AG04449 (cell line): ENCODE measurements at regions of chr2 and their contacts with region 1.

Region 1: DNA sequence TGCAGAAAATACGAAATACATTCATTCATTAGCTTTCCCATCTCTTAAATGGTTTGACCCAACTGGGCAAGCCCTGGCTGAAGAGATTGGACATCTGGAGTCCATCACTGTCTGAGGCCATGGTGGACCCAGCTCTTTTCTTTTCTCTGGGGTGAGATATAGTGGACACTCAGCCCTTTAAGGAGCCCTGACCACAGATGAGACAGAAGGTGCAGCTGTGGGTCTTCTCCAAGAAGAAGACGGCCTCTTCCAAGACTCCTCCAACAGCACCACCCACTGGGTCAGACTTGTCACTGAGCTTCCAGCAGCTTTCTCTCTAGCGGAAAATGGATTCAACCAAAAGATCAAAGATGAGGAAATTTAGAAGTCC is 27.2 kb downstream of the TWIST2 start:
- DNase-seq: no peak
- H3K4me3 ChIP-seq: no peak overlapping the region
- CTCF ChIP-seq: no peak

Region 2: DNA sequence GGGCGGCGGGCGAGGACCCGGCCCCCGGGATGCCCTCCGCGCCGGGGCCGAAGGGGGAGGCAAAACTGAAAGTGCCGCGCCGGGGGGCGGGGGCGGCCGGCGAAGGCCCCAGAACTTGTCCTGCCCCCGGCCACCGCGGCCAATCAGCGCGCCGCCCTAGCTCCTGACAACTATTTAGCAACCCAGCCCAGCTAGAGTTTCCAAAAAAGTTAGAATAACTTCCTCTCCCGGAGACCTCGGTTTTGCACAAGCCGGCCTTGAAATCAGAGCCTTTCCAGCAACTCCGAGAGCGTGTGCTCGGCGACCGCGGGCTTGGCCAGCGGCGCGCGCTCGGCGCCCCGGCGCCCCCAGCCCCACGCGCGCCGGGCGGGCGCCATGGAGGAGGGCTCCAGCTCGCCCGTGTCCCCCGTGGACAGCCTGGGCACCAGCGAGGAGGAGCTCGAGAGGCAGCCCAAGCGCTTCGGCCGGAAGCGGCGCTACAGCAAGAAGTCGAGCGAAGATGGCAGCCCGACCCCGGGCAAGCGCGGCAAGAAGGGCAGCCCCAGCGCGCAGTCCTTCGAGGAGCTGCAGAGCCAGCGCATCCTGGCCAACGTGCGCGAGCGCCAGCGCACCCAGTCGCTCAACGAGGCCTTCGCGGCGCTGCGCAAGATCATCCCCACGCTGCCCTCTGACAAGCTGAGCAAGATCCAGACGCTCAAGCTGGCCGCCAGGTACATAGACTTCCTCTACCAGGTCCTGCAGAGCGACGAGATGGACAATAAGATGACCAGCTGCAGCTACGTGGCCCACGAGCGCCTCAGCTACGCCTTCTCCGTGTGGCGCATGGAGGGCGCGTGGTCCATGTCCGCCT is 27.0 kb before region 1 on chr2 and contains the start of gene TWIST2:
- CTCF ChIA-PET with region 1: interaction called, 13 read pairs
- POLR2A ChIA-PET with region 1: interaction called, 4 read pairs
- DNase-seq: peak; percentile 85
- H3K4me3 ChIP-seq: peak within 1 kb of the TSS; percentile 89
- CTCF ChIP-seq: peak; percentile 26

Region 3: DNA sequence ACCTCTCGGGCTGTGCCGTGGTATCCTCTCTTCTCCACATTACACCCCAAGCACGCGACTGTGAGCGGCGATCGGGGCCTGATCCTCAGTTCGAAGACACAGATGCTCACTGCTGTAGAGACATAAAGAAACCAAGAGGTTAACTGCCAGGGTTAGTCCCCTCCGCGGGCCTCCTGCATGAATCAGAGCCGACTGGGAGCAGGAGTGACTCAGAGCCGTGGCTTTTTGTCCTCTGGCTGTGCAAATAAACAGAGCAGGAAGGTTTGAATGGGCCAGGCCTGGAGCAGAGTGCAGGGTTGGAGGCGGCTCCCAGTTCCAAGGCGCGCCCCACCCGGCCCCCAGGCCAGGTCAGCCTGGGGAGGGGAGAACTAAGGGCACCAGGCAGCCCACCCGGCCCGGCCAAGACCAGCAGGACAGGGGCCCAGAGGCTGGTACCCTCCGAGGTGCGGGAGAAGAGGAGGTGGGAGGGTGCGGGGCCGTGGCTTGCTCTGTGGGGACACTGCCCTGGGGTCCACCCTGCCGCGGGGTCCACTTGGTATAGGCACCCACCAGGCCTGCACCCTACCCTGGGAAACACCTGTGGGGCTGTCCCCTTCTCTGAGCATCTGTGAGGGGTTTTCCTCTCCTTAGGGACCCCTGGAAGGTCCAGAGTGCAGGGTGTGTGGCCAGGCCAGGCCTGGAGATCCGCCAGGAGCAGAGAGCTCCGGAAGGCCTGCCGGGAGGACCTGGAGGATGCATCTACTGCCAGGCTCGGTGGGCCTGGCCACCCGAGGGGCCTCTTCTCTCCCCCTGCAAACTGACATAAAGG is 10.7 kb before region 1 on chr2:
- CTCF ChIA-PET with region 1: interaction called, 25 read pairs
- POLR2A ChIA-PET with region 1: no interaction called
- DNase-seq: peak; percentile 98
- H3K4me3 ChIP-seq: peak overlapping the region; percentile 18
- CTCF ChIP-seq: no peak

Region 4: GRCh38 chr2:238895891-238896600 is 21.0 kb after region 1 on chr2:
- CTCF ChIA-PET with region 1: interaction called, 15 read pairs
- POLR2A ChIA-PET with region 1: no interaction called
- DNase-seq: peak; percentile 62
- H3K4me3 ChIP-seq: no peak overlapping the region
- CTCF ChIP-seq: no peak

Region 5: GRCh38 chr2:239061824-239062570 is 186.9 kb after region 1 on chr2:
- CTCF ChIA-PET with region 1: no interaction called
- POLR2A ChIA-PET with region 1: no interaction called
- DNase-seq: no peak
- H3K4me3 ChIP-seq: no peak overlapping the region
- CTCF ChIP-seq: no peak

Region 6: DNA sequence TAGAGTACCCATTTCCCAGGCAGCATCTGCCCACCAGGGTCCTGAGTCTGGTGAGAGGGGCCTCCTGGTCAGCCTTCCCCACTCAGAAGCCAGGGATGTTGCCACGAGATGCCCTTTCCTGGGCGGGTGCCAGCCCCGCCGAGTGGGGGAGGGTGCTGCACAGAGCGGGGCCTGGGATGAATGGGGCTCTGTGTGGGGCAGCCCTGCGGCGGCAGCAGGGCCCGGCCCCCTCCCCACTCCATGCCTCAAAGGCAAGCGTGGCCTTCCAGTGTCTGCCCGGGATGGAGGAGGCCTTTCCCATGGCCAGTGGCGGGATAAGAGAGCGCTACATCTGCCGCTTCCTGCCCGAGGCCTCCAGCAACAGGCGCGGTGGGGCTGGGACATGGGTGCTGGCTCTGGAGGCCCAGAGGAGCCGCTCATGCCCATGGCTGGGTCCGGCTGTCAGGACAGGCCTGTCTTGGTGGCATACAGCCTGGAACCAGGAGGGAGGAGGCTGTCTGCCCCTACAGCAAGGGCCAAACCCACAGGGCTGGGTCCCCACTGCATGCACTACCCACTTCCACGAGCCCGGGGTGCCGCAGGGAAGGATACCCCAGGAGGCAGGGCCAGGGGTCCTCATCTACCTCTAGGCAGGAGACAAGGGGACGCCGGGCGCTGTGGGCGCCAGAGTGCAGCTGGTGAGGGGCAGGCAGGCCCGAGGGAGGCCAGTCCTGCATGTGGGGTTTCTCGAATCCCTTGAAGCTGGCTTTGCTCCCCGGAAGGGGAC is 1465.1 kb after region 1 on chr2:
- CTCF ChIA-PET with region 1: no interaction called
- POLR2A ChIA-PET with region 1: no interaction called
- DNase-seq: no peak
- H3K4me3 ChIP-seq: no peak overlapping the region
- CTCF ChIP-seq: no peak